ENCODE measurements at regions of chr4 and their contacts with region 1.

Region 1: DNA sequence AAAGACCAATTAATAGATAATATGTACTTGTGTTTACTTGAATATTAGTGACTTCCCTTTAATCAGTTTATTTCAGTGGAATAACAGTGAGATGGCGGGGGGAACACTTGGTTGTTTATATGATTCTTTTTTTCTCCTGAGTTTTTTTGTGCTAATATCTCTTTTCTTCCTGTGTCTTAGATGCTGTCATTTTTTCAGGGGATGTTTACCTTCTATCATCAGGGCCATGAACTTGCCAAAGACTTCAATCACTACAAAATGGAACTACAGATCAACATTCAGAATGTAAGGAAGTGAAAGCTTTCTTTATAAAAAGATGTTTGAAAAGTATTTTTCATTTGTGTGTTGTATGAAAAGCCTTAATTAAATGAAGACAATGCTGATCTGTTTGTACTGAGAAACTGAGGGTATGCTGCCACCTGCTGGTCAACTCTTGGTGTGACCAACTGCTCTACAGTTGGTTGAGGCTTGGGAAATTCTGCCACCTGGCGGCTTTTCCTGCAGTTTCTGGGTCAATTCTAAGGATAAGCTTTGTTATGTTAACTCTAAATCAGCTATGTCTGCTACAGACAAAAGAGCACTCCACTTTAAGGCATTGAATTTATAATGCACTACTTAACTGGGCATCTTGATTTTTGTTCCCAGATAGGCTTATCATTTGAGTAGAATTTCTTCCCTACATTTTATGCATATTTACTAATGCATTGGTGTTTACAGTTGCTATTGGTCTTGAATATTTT is 134.8 kb downstream of the ARHGAP10 start:
- DNase-seq: peak; percentile 93
- H3K4me3 Mint-ChIP-seq: no peak overlapping the region
- H3K27ac Mint-ChIP-seq: peak overlapping the region; percentile 75
- H3K4me1 Mint-ChIP-seq: no peaks in the 10 kb centered on the region
- H3K27me3 Mint-ChIP-seq: no peaks in the 10 kb centered on the region
- CTCF ChIP-seq: peak; percentile 98

Region 2: GRCh38 chr4:147019061-147019460 is 847.6 kb before region 1 on chr4:
- CTCF ChIA-PET with region 1: interaction called, 4 read pairs
- POLR2A ChIA-PET with region 1: no interaction called
- intact Hi-C with region 1: loop called (anchors 2 kb)
- DNase-seq: peak; percentile 84
- H3K4me3 Mint-ChIP-seq: no peak overlapping the region
- H3K27ac Mint-ChIP-seq: no peak overlapping the region
- H3K4me1 Mint-ChIP-seq: peaks cover 26% of the 10 kb centered on the region
- H3K27me3 Mint-ChIP-seq: no peaks in the 10 kb centered on the region
- CTCF ChIP-seq: peak; percentile 89

Region 3: DNA sequence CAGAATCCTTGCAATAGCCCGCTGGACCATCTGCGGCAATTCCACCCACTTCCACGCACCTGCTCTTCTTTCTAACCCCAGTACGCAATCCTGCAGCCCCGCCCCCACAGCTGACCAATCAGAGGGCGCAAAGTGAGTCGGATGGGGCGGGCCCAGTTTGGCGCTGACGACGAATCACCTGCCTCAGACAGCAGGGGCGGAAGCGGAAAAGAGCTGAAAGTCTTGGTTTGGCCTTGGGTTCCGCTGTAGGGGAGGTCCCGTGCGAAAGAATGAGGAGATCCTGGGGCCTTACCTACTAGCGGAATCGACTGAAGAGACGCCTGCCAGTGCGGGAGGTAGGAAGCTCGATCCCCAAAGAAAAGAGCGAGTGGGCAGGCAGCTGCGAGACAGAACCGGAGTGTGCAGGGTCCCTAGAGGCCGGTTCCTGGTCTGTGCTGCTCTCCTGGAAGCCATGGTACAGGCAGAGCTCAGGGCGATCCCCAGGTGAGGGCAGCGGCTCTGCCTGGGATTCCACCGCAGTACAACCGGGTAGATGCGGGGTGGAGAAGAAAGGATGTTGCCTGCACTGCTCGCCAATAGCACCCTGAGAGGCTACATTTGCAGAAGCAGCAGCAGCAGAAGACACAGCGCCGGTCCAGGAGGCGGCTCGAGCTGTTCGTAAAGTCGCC is 249.4 kb before region 1 on chr4 and contains the start of gene TMEM184C:
- CTCF ChIA-PET with region 1: interaction called, 18 read pairs
- POLR2A ChIA-PET with region 1: interaction called, 3 read pairs
- intact Hi-C with region 1: loop called (anchors 2 kb)
- DNase-seq: peak; percentile 98
- H3K4me3 Mint-ChIP-seq: peak within 1 kb of the TSS; percentile 82
- H3K27ac Mint-ChIP-seq: peak within 1 kb of the TSS; percentile 86
- H3K4me1 Mint-ChIP-seq: peaks cover 18% of the 10 kb centered on the region
- H3K27me3 Mint-ChIP-seq: no peaks in the 10 kb centered on the region
- CTCF ChIP-seq: no peak
- total RNA-seq, gene TMEM184C: 33.9 and 37.1 TPM in 2 replicates

Region 4: DNA sequence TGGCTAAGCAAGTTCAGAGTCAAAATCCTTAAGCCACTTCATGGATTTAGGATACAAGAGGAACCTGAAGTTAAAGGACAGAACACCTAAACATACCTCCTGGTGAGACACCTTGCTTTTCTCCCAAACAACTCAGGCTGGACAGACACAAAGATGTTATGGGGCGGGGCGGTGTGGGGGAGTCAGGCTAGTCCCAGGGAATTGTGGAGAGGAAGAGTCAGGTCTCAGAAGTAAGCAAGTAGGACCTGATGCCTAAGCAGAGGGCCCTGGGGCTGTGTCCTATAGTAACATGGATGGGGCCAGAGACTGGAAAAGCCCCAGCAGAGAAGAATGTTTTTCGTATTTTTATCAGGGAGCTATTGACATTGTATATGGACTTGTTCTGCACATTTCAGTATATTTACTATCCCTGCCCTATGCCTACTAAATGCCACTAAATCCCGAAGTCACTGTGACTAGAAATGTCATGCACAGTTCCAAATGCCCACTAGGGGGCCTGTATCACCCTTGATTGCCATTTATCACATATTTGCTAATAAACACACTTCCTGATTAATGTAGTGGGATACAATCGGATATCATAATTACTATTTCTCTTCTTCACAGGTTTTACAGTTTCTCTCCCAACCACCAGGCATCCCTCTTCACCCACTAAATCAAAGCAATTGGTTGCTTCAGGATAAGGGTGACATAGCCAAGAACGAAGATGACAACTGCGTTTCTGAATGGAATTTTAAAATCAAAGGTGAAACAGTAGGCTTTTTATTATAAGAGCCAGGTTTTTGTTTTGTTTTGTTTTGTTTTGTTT is 158.6 kb before region 1 on chr4:
- CTCF ChIA-PET with region 1: interaction called, 247 read pairs
- POLR2A ChIA-PET with region 1: interaction called, 12 read pairs
- intact Hi-C with region 1: loop called (anchors 1 kb)
- DNase-seq: peak; percentile 71
- H3K4me3 Mint-ChIP-seq: no peak overlapping the region
- H3K27ac Mint-ChIP-seq: no peak overlapping the region
- H3K4me1 Mint-ChIP-seq: peaks cover 12% of the 10 kb centered on the region
- H3K27me3 Mint-ChIP-seq: no peaks in the 10 kb centered on the region
- CTCF ChIP-seq: peak; percentile 76

Region 5: DNA sequence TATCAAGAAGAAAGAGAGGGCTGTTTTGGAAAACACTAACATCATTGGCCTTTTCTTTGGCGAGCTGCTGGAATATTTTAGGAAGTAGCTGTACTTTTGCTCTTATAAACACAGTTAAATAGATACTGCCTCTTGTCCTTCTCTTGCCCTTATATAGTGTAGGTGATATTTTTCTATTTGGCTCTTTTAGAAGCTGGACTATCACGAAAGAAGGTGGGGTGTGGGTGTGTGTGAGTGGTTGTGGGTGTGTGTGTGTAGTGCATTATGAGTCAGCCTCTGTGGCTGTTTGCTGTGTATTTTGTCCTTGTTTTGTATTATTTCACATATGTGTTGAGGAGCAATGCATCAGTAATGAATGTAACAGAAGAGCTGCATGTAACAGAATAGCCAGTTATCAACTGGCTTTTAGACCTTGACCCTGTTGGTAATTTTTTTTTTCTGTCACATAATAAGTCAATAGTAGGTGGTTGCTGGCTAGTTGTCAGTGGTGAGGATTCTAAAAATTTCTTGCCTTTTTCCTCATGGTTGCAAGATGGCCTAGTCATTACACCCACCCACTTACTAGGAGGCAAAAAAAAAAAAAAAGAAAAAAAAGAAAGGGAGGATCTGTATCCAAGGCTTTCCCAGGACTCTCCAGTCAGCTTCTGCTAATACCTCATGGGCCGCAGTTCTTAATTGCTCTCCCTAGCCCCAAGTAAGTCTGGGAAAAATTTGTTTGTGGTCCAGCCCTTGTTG is 111.0 kb before region 1 on chr4:
- CTCF ChIA-PET with region 1: interaction called, 31 read pairs
- POLR2A ChIA-PET with region 1: no interaction called
- intact Hi-C with region 1: no loop called
- DNase-seq: no peak
- H3K4me3 Mint-ChIP-seq: no peak overlapping the region
- H3K27ac Mint-ChIP-seq: peak overlapping the region; percentile 61
- H3K4me1 Mint-ChIP-seq: peaks cover 41% of the 10 kb centered on the region
- H3K27me3 Mint-ChIP-seq: no peaks in the 10 kb centered on the region
- CTCF ChIP-seq: no peak

Region 6: DNA sequence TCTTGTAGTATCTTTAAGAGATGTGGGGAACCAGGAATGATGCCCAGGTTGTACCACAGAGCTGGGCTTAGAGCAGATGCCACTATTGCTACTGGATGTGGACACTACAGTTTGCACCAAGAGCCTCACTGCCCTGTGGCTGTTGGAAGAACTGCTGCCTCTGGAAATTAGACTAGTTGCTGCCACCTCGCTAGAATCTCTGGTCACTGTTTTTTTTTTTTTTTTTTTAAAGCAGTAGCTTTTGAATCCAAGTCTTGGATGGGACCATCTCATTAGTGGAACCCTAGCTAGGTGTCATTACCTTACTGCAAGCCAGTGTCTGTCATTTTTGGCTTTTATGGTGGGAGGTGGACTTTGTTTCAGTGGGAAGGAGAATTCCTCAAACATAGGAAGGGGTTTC is 29.3 kb before region 1 on chr4:
- CTCF ChIA-PET with region 1: interaction called, 126 read pairs
- POLR2A ChIA-PET with region 1: interaction called, 3 read pairs
- intact Hi-C with region 1: no loop called
- DNase-seq: peak; percentile 51
- H3K4me3 Mint-ChIP-seq: no peak overlapping the region
- H3K27ac Mint-ChIP-seq: no peak overlapping the region
- H3K4me1 Mint-ChIP-seq: no peaks in the 10 kb centered on the region
- H3K27me3 Mint-ChIP-seq: no peaks in the 10 kb centered on the region
- CTCF ChIP-seq: peak; percentile 9

Region 7: DNA sequence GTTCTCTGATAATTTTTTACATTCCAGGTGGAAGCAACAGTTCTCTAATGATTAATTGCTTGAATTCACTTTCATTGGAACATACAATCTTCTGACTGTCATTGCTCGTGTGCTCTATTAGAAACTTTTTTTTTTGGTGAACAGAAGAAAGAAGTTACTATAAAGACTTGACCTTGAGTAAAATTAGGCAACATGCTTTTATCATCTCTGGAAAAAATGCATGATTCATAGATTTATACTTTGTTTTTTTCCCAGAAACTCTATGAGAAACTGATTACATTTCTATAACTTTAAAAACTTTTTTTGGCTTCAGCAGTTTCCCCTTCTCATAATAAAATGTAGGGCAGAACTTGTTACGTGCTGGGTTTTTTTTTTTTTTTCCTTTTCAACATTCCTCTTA is 32.8 kb after region 1 on chr4:
- CTCF ChIA-PET with region 1: no interaction called
- POLR2A ChIA-PET with region 1: no interaction called
- intact Hi-C with region 1: no loop called
- DNase-seq: peak; percentile 4
- H3K4me3 Mint-ChIP-seq: no peak overlapping the region
- H3K27ac Mint-ChIP-seq: no peak overlapping the region
- H3K4me1 Mint-ChIP-seq: peaks cover 12% of the 10 kb centered on the region
- H3K27me3 Mint-ChIP-seq: no peaks in the 10 kb centered on the region
- CTCF ChIP-seq: no peak

Region 8: GRCh38 chr4:148207068-148207467 is 340.4 kb after region 1 on chr4:
- CTCF ChIA-PET with region 1: no interaction called
- POLR2A ChIA-PET with region 1: no interaction called
- intact Hi-C with region 1: no loop called
- DNase-seq: peak; percentile 21
- H3K4me3 Mint-ChIP-seq: no peak overlapping the region
- H3K27ac Mint-ChIP-seq: no peak overlapping the region
- H3K4me1 Mint-ChIP-seq: no peaks in the 10 kb centered on the region
- H3K27me3 Mint-ChIP-seq: no peaks in the 10 kb centered on the region
- CTCF ChIP-seq: no peak